Activated CD8-positive, alpha-beta T cell treated with anti-CD3 and anti-CD28 coated beads, Interleukin-2, amount 10 ng/mL, durations not matched to agents 7 days and 5 days (primary cell): ENCODE measurements at regions of chr6 and their contacts with region 1.

Region 1: GRCh38 chr6:39302669-39303424 is 11.4 kb downstream of the KCNK17 start:
- DNase-seq: peak; percentile 93
- ATAC-seq: peak; percentile 99
- H3K4me3 Mint-ChIP-seq: peak overlapping the region; percentile 46
- H3K27ac Mint-ChIP-seq: peak overlapping the region; percentile 70
- H3K4me1 Mint-ChIP-seq: peaks cover 10% of the 10 kb centered on the region
- H3K27me3 Mint-ChIP-seq: peaks cover 10% of the 10 kb centered on the region

Region 2: GRCh38 chr6:38871741-38872568 is 430.9 kb before region 1 on chr6:
- CTCF ChIA-PET with region 1: interaction called, 28 read pairs
- POLR2A ChIA-PET with region 1: no interaction called
- DNase-seq: peak; percentile 68
- ATAC-seq: no peak
- H3K4me3 Mint-ChIP-seq: no peak overlapping the region
- H3K27ac Mint-ChIP-seq: no peak overlapping the region
- H3K4me1 Mint-ChIP-seq: peaks cover 25% of the 10 kb centered on the region
- H3K27me3 Mint-ChIP-seq: peaks cover 7% of the 10 kb centered on the region

Region 3: DNA sequence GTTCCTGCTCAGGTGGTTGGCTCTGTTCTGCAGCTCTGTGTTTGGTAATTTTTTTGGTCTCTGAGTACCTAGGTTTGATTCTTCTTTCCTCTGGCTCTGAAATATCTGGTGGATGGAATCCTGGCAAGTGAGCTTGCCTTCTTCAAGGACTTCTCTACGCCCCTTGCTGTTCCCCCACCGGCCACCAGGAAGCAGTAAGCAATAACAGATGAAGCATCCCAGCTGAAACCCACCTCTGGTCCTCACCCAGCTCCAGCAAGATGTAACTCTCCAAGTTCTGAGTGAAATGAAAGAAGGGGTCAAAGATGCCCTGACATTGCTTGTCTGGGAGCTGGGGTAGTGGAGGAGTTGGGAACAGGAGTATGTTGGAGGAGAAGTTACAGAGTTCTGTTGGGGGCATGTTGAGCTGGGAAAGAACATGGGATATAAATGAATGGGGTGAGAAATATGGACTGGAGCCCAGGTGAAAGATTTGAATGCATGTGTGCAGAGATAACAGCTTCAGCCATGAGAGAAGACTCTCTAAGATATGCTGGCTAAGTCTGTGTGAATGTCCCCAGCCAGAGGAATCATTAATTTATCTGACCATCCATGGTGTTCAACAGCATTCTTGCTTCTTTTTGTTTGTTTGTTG is 305.6 kb before region 1 on chr6:
- CTCF ChIA-PET with region 1: interaction called, 12 read pairs
- POLR2A ChIA-PET with region 1: no interaction called
- DNase-seq: peak; percentile 35
- ATAC-seq: no peak
- H3K4me3 Mint-ChIP-seq: no peak overlapping the region
- H3K27ac Mint-ChIP-seq: no peak overlapping the region
- H3K4me1 Mint-ChIP-seq: no peaks in the 10 kb centered on the region
- H3K27me3 Mint-ChIP-seq: peaks cover 41% of the 10 kb centered on the region

Region 4: GRCh38 chr6:39114704-39115599 is 187.9 kb before region 1 on chr6 and contains the start of gene SAYSD1:
- CTCF ChIA-PET with region 1: interaction called, 10 read pairs
- POLR2A ChIA-PET with region 1: no interaction called
- DNase-seq: peak; percentile 95
- ATAC-seq: peak; percentile 89
- H3K4me3 Mint-ChIP-seq: peak within 1 kb of the TSS; percentile 87
- H3K27ac Mint-ChIP-seq: peak within 1 kb of the TSS; percentile 96
- H3K4me1 Mint-ChIP-seq: peaks cover 58% of the 10 kb centered on the region
- H3K27me3 Mint-ChIP-seq: peaks cover 1% of the 10 kb centered on the region
- total RNA-seq, gene SAYSD1: 11.0 to 11.8 TPM

Region 5: GRCh38 chr6:39173270-39173669 is 129.6 kb before region 1 on chr6:
- CTCF ChIA-PET with region 1: interaction called, 179 read pairs
- POLR2A ChIA-PET with region 1: no interaction called
- DNase-seq: no peak
- ATAC-seq: no peak
- H3K4me3 Mint-ChIP-seq: no peak overlapping the region
- H3K27ac Mint-ChIP-seq: no peak overlapping the region
- H3K4me1 Mint-ChIP-seq: no peaks in the 10 kb centered on the region
- H3K27me3 Mint-ChIP-seq: no peaks in the 10 kb centered on the region

Region 6: DNA sequence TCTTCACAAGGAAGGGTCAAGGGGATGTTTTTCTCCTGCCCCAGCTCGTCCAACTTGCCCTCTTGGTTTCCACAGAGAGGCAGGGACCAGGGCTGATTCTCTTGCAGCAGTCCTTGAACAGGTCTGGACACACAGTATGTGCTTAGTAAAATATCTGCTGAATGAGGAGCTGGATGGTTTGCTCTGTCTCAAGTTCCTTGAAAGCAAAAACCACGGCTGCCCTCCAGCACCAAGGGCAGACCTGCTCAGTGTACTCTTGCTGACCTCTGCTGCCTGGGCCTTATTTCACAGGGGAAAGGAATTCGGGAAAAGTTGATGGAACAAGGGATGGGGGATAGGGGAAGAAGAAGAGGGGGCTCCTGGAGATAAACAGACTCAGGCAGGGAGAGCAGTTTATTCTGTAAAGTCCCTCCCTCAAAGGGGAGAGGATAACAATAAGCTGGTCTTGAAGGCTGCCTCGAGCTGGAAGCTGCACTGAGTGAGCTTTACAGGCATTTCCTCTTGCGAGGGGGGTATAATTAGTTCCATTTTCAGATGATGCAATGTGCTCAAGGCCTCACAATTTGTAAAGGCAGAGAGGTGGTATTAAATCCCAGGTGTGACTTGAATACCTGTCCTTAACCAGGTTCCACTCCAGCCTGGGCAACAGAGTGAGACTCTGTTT is 83.8 kb before region 1 on chr6:
- CTCF ChIA-PET with region 1: interaction called, 24 read pairs
- POLR2A ChIA-PET with region 1: no interaction called
- DNase-seq: peak; percentile 33
- ATAC-seq: peak; percentile 52
- H3K4me3 Mint-ChIP-seq: peak overlapping the region; percentile 16
- H3K27ac Mint-ChIP-seq: peak overlapping the region; percentile 86
- H3K4me1 Mint-ChIP-seq: peaks cover 90% of the 10 kb centered on the region
- H3K27me3 Mint-ChIP-seq: no peaks in the 10 kb centered on the region

Region 7: GRCh38 chr6:39263303-39264037 is 39.4 kb before region 1 on chr6:
- CTCF ChIA-PET with region 1: interaction called, 11 read pairs
- POLR2A ChIA-PET with region 1: no interaction called
- DNase-seq: no peak
- ATAC-seq: no peak
- H3K4me3 Mint-ChIP-seq: no peak overlapping the region
- H3K27ac Mint-ChIP-seq: no peak overlapping the region
- H3K4me1 Mint-ChIP-seq: no peaks in the 10 kb centered on the region
- H3K27me3 Mint-ChIP-seq: peaks cover 2% of the 10 kb centered on the region